ENCODE measurements at regions of chr3 and their contacts with region 1.

Region 1: DNA sequence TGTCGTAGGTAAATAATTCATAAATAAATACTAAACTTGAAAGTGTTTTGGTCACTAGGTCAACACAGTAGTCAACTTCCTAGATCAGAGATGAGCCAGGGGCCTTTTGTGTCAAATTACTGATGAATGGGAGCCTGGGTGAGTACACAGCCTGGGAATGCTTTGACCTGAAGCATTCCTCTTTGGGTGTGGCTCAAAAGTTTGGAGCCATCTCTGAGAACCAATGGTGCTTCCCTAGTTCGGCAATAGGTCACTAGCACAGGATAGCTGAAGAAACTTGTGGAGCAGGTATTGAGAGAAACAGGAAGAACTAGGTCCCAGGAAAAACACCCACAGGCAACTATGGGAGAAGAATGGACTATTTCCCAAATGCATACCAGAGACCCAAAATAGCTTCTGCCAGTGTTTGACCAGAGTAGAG is 56.6 kb upstream of the PLXND1 start:
- H3K4me3 Mint-ChIP-seq: no peak overlapping the region
- H3K27ac Mint-ChIP-seq: no peak overlapping the region
- H3K4me1 Mint-ChIP-seq: peaks cover 10% of the 10 kb centered on the region
- H3K27me3 Mint-ChIP-seq: no peaks in the 10 kb centered on the region

Region 2: GRCh38 chr3:129606636-129607390 is 56.2 kb before region 1 on chr3 and contains the start of gene PLXND1:
- intact Hi-C with region 1: no loop called
- H3K4me3 Mint-ChIP-seq: peak within 1 kb of the TSS; percentile 92
- H3K27ac Mint-ChIP-seq: peak within 1 kb of the TSS; percentile 99
- H3K4me1 Mint-ChIP-seq: peaks cover 62% of the 10 kb centered on the region
- H3K27me3 Mint-ChIP-seq: peaks cover 13% of the 10 kb centered on the region

Region 3: DNA sequence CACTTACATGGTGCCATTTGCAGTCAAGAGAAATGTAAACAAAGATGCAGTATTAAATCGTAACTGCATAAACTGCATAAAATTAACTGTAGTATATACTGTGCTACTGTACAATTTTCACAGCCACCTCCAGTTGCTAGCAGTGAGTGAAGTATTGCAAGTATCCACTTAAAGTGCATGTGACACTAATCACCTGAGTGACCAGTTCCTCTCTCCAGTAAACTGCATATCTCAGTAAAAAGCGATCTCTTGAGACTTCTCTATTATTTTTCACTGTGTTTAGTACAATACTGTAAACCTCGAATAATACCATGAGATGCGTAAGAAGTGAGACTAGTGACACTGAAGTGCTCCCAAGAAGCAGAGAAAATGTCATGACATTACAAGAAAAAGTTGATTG is 55.2 kb after region 1 on chr3:
- intact Hi-C with region 1: loop called (anchors 10 kb)
- H3K4me3 Mint-ChIP-seq: no peak overlapping the region
- H3K27ac Mint-ChIP-seq: no peak overlapping the region
- H3K4me1 Mint-ChIP-seq: peaks cover 11% of the 10 kb centered on the region
- H3K27me3 Mint-ChIP-seq: no peaks in the 10 kb centered on the region